ENCODE measurements at regions of chr10 and their contacts with region 1.

Region 1: GRCh38 chr10:70493660-70494234 is 15.2 kb downstream of the PALD1 start:
- DNase-seq: no peak
- H3K4me3 Mint-ChIP-seq: no peak overlapping the region
- H3K27ac Mint-ChIP-seq: no peak overlapping the region
- H3K4me1 Mint-ChIP-seq: peaks cover 15% of the 10 kb centered on the region
- H3K27me3 Mint-ChIP-seq: no peaks in the 10 kb centered on the region

Region 2: DNA sequence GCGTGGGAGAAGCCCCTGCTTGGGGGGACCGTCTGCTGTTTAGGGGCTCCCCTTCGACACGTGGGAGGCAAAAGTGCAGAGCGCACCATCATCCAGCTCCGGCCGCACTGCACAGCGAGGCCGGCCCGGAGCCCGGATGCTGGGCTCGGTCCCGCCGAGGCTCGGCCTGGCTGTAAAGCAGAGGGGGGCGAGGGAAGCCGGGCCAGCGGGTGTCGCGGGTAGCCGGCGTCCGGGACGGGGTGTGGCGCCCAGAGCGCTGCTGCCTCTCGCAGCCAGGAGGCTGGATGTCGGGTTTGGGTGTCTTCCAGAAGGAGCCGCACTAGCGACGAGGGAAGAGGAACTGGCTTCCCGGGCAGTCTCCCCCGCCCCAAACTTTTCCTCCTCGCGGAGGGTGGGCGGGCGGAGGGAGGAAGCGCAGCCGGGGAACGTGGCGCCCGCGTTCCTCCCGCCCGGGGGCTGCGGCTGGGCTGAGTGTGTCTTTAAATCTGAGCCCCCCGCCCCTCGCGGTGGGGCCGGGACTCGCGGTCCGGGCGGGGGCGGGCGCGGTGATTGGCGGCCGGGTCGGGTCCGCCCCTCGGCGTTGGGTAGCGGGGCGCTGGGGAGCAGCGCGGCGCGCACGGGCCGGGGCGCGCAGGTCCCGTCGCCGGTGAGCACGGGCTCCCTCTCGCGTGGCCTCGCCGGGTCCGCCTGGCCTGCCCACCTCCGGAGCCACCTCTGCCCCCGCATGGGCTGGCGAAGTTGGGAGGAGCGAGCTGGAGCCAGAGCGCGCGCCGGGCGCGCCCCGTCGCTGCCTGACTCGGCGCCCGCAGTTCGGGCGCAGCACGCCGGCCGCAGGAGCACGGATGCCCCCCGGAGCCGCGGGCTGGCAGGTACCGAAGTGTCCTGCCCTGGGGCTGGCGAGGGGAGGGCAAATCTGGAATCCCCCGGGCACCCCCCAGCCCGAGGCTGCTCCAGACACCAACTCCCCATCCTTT is 15.3 kb before region 1 on chr10 and contains the start of gene PALD1:
- CTCF ChIA-PET with region 1: interaction called, 4 read pairs
- intact Hi-C with region 1: loop called (anchors 1 kb)
- DNase-seq: peak; percentile 42
- H3K4me3 Mint-ChIP-seq: peak within 1 kb of the TSS; percentile 74
- H3K27ac Mint-ChIP-seq: peak within 1 kb of the TSS; percentile 41
- H3K4me1 Mint-ChIP-seq: peaks cover 43% of the 10 kb centered on the region
- H3K27me3 Mint-ChIP-seq: peaks cover 29% of the 10 kb centered on the region
- total RNA-seq, gene PALD1: 0.69 TPM